B cell (primary cell): ENCODE measurements at regions of chr21 and their contacts with region 1.

Region 1: DNA sequence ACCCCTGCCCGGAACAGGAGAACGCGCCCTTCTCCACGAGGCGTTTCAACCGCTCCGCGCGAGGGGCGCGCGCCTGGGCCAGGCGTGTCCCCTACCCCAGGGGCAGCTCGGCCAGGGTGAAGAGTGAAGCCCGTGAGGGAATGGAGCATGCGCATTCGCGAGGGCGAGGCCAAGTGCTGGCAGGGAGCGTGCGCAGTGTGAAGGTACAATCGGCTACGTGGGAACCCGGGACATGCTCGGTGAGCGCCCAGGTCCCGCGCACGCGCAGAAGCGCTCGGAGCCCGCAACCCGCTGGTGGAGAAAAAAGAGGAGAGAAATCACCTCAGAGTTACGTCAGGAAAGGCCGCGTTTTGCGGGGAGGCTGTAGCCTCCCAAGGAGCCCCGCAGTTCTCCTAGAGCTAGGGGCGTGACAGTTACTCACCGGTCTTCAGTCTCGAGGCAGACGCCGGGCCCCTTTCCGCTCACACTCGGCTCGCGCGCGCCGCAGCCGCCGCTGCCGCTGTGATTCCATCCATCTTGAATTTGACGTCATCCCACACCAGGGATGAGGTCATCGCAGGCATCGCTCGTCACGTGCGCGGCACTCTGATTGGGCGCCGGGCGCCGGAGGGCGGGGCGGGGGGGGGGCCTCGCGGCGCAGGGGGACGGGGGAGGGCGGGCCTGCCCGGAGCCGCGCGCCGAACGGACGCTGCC is at the start of gene ZBTB21:
- DNase-seq: peak; percentile 99
- ATAC-seq: peak; percentile 78
- H3K4me3 ChIP-seq: peak within 1 kb of the TSS; percentile 48 to 90 (median 74)
- H3K4me3 Mint-ChIP-seq: peak within 1 kb of the TSS; percentile 98
- H3K27ac ChIP-seq: peak within 1 kb of the TSS; percentile 99
- H3K27ac Mint-ChIP-seq: peak within 1 kb of the TSS; percentile 100
- H3K4me1 ChIP-seq: peaks cover 3 to 6% of the 10 kb centered on the region in 2 donors
- H3K4me1 Mint-ChIP-seq: peaks cover 31% of the 10 kb centered on the region
- H3K27me3 ChIP-seq: no peaks in the 10 kb centered on the region
- H3K27me3 Mint-ChIP-seq: no peaks in the 10 kb centered on the region
- CTCF ChIP-seq: no peak
- total RNA-seq, gene ZBTB21: 39.0 and 40.1 TPM in 2 replicates

Region 2: DNA sequence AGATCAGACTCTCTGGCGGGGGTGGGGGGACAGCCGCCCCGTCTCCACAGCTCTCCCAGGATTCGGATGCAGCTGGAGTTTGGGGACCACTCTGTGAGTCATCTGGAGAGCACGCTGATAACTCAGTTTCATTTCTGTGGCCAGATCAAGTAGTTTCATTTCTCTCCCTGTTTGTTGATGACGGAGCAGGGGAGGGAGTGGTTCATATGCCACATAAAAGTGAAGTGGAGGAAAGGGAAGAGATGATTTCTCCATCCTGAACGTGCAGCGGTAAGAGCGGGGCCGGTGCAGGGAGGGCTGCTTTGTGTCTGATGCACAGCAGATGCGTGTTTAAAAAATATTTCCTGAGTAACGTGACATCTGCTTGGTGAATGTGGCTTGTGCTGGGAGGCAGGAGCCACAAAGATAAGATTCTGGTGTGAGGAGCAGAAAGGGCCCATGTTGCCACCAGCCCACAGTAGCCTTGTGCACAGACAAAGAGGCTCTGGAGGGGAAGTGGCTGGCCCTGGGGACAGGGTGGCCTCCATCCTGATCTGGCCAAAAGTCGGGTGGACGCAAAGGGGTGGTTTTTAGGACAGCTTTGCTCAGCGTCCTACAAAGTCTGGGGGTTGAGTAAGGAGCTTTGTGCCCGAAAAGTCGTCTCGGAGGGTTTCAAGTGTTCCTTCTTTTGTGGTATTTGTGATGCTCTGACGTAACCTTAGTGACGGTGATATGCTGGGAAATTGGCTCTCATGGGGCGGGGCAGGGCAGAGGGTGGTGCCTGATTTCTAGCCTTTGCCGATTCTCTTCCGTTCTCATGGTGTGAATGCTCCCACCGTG is 648.0 kb before region 1 on chr21 and contains the start of gene MX2:
- CTCF ChIA-PET with region 1: no interaction called
- POLR2A ChIA-PET with region 1: no interaction called
- intact Hi-C with region 1: loop called (anchors 10 kb)
- DNase-seq: peak; percentile 90
- ATAC-seq: peak; percentile 81
- H3K4me3 ChIP-seq: peak within 1 kb of the TSS; percentile 60 to 79 (median 69)
- H3K4me3 Mint-ChIP-seq: peak within 1 kb of the TSS; percentile 83
- H3K27ac ChIP-seq: peak within 1 kb of the TSS; percentile 94 to 98
- H3K27ac Mint-ChIP-seq: peak within 1 kb of the TSS; percentile 99
- H3K4me1 ChIP-seq: peaks cover 42 to 59% of the 10 kb centered on the region in 2 donors
- H3K4me1 Mint-ChIP-seq: peaks cover 57% of the 10 kb centered on the region
- H3K27me3 ChIP-seq: no peaks in the 10 kb centered on the region
- H3K27me3 Mint-ChIP-seq: no peaks in the 10 kb centered on the region
- CTCF ChIP-seq: no peak
- total RNA-seq, gene MX2: 64.3 and 72.8 TPM in 2 replicates

Region 3: GRCh38 chr21:41868062-41868710 is 141.8 kb before region 1 on chr21:
- CTCF ChIA-PET with region 1: no interaction called
- POLR2A ChIA-PET with region 1: no interaction called
- intact Hi-C with region 1: loop called (anchors 10 kb)
- DNase-seq: peak; percentile 65
- ATAC-seq: peak; percentile 76
- H3K4me3 ChIP-seq: no peak overlapping the region
- H3K4me3 Mint-ChIP-seq: peak overlapping the region; percentile 61
- H3K27ac ChIP-seq: no peak overlapping the region
- H3K27ac Mint-ChIP-seq: no peak overlapping the region
- H3K4me1 ChIP-seq: peaks cover 31 to 41% of the 10 kb centered on the region in 2 donors
- H3K4me1 Mint-ChIP-seq: peaks cover 58% of the 10 kb centered on the region
- H3K27me3 ChIP-seq: no peaks in the 10 kb centered on the region
- H3K27me3 Mint-ChIP-seq: no peaks in the 10 kb centered on the region
- CTCF ChIP-seq: no peak

Region 4: DNA sequence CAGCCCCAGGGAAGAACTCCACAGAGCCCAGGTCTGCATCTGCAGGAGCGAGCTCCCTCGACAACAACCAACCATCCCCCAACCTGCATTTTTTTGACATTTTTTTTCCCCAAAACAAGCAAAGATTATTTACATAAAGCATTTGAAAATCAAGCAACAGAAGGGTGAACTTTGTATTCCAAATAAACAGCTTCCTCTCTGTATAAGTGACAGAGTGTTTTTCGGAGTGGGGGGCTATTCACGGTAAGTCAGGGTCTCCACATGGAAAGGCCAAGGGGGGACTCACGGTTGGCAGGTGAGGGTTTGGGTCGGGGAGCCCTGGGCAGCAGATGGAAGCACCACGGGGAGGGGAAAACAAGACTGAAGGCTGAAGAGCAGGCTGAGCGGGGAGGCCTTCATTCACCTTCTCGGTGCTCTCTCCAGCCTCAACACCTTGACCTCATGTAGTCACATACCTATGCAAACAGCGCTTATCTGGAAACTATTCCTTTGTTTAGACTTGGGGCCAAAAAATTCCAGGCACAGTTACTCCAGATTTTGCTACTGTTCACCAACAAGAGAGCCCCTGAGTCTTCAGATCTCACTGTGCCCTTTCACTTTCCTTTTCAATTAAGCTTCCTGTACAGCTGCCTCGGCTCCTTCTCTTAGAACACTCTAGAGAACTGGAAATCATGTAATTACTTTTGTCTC is 83.7 kb before region 1 on chr21:
- CTCF ChIA-PET with region 1: no interaction called
- POLR2A ChIA-PET with region 1: interaction called, 3 read pairs
- intact Hi-C with region 1: loop called (anchors 1 kb)
- DNase-seq: peak; percentile 76
- ATAC-seq: peak; percentile 70
- H3K4me3 ChIP-seq: peak overlapping the region; percentile 55 to 70 (median 62)
- H3K4me3 Mint-ChIP-seq: peak overlapping the region; percentile 94
- H3K27ac ChIP-seq: peak overlapping the region; percentile 82 to 87
- H3K27ac Mint-ChIP-seq: peak overlapping the region; percentile 98
- H3K4me1 ChIP-seq: peaks cover 71 to 85% of the 10 kb centered on the region in 2 donors
- H3K4me1 Mint-ChIP-seq: peaks cover 81% of the 10 kb centered on the region
- H3K27me3 ChIP-seq: no peaks in the 10 kb centered on the region
- H3K27me3 Mint-ChIP-seq: no peaks in the 10 kb centered on the region
- CTCF ChIP-seq: no peak

Region 5: DNA sequence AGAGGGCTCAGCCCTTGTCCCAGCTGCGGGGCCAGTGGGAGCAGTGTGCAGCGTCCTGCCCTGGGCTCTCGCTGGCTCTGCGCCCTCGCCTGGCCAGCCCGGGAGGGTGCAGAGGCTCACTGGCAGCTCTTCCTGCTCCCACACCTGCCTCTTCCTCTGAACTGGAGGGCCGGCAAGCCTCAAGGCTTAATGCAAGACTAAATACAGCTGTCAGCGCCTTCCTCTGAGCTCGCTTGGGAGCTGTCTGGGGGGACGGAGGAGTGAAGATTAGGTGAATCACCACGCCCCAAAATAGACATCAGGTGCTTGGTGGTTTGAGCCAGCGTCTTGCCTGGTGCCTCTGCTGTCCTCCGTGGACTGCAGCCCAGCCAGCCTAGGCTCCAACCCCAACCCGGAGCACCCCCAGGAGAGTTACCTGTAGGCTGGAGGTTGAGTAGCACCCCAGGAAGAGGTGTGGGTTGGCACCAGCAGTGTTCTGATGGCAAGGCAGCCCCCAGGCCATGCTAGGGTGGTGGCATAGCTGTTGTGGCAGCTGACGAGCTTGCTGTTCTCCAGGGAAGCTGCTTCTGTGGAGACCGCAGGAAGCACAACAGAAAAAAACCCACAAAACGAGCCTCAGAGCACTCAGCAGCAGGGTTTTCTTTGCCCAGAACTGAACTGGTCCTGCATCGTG is 98.0 kb after region 1 on chr21:
- CTCF ChIA-PET with region 1: interaction called, 37 read pairs
- POLR2A ChIA-PET with region 1: interaction called, 10 read pairs
- intact Hi-C with region 1: loop called (anchors 1 kb)
- DNase-seq: peak; percentile 85
- ATAC-seq: peak; percentile 86
- H3K4me3 ChIP-seq: peak overlapping the region in 4 of 5 experiments; percentile 5 to 50 (median 28)
- H3K4me3 Mint-ChIP-seq: peak overlapping the region; percentile 81
- H3K27ac ChIP-seq: peak overlapping the region; percentile 41 to 50
- H3K27ac Mint-ChIP-seq: peak overlapping the region; percentile 87
- H3K4me1 ChIP-seq: peaks cover 17 to 22% of the 10 kb centered on the region in 2 donors
- H3K4me1 Mint-ChIP-seq: peaks cover 38% of the 10 kb centered on the region
- H3K27me3 ChIP-seq: peaks cover 0 to 7% (median 0%) of the 10 kb centered on the region in 4 experiments
- H3K27me3 Mint-ChIP-seq: peaks cover 6% of the 10 kb centered on the region
- CTCF ChIP-seq: peak; percentile 70